SK-N-SH (cell line): ENCODE measurements at regions of chr7 and their contacts with region 1.

Region 1: GRCh38 chr7:155269766-155270585 is 27.7 kb upstream of the INSIG1 start:
- DNase-seq: no peak
- H3K4me3 ChIP-seq: no peak overlapping the region
- H3K27ac ChIP-seq: no peak overlapping the region
- H3K4me1 ChIP-seq: no peaks in the 10 kb centered on the region
- H3K27me3 ChIP-seq: no peaks in the 10 kb centered on the region; the same call in none of the 2 replicates
- CTCF ChIP-seq: no peak
- EP300 ChIP-seq: no peak
- RAD21 ChIP-seq: no peak

Region 2: GRCh38 chr7:155257482-155258225 is 12.3 kb before region 1 on chr7:
- CTCF ChIA-PET with region 1: interaction called, 10 read pairs
- POLR2A ChIA-PET with region 1: interaction called, 3 read pairs
- DNase-seq: peak; percentile 86
- H3K4me3 ChIP-seq: no peak overlapping the region
- H3K27ac ChIP-seq: peak overlapping the region in 1 of 2 experiments; percentile 99; a peak in 2 of 4 replicates
- H3K4me1 ChIP-seq: peaks cover 5 to 47% of the 10 kb centered on the region in 2 experiments; a peak in 3 of 4 replicates
- H3K27me3 ChIP-seq: peaks cover 5% of the 10 kb centered on the region; the same call in 1 of the 2 replicates
- CTCF ChIP-seq: no peak
- EP300 ChIP-seq: no peak; a peak in 2 of 4 replicates
- RAD21 ChIP-seq: no peak